ENCODE measurements at regions of chr3 and their contacts with region 1.

Region 1: DNA sequence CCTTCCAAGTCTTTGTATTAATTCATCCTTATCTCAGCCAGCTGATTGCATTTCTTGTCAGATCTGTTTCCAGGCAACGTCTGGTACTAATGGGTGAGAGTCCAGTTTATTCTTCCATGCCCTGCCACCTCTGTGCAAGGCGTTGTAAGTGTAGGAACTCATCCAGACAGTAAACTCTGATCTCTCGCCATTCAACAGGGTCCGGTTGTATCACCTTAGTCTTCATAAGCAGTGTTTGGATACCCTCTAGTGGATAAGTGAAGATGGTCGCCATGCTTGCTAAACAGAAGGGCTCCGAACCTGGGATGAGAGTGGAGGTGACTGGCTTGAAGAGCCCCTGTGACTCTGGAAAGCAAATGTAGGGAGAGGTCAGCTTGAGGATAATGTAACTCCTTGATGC is 51.6 kb upstream of the CMTM7 start:
- DNase-seq: peak in 1 of 3 donors; percentile 12
- ATAC-seq: peak; percentile 59
- H3K4me3 ChIP-seq: no peak overlapping the region
- H3K4me1 ChIP-seq: no peaks in the 10 kb centered on the region
- CTCF ChIP-seq: no peak

Region 2: GRCh38 chr3:32177702-32178198 is 162.3 kb before region 1 on chr3:
- intact Hi-C with region 1: loop called in 1 of 2 experiments (anchors 10 kb)
- DNase-seq: peak in 1 of 3 donors; percentile 85
- ATAC-seq: peak; percentile 91
- H3K4me3 ChIP-seq: no peak overlapping the region
- H3K4me1 ChIP-seq: no peaks in the 10 kb centered on the region
- CTCF ChIP-seq: peak; percentile 42